ENCODE measurements at regions of chr17 and their contacts with region 1.

Region 1: DNA sequence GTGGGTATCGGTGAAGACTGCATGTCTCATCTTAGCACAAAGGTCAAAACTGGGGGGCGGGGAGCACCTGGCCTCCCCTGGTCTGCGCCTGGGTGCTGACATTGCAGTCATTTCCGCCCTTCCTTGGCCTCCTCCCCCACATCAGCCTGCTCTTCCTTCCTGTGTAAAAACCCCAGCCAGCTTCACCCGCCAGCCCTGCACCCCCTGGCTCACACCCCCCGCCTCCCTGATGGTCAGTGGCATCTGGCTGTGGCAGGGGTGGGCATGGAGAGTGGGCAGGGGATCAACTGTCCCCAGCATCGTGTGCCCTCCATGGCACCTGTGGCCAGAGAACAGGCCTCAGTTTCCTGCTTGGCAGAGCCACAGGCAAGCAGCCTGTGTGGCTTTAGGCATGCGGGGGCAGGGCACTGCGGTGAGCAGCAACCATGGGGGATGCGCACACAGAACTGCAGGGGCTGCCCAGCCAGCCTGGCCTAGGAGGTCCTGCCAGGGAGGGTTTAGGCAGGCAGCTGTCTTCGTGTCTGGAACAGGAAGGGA is 26.5 kb upstream of the LASP1NB start:
- DNase-seq: peak; percentile 68
- ATAC-seq: peak; percentile 93
- H3K4me3 Mint-ChIP-seq: peak overlapping the region; percentile 55
- H3K27ac Mint-ChIP-seq: peak overlapping the region; percentile 93
- H3K4me1 Mint-ChIP-seq: peaks cover 42% of the 10 kb centered on the region
- H3K27me3 Mint-ChIP-seq: no peaks in the 10 kb centered on the region
- CTCF ChIP-seq: no peak

Region 2: GRCh38 chr17:38777641-38778250 is 121.1 kb before region 1 on chr17:
- CTCF ChIA-PET with region 1: no interaction called
- POLR2A ChIA-PET with region 1: no interaction called
- intact Hi-C with region 1: no loop called
- DNase-seq: no peak
- ATAC-seq: no peak
- H3K4me3 Mint-ChIP-seq: no peak overlapping the region
- H3K27ac Mint-ChIP-seq: no peak overlapping the region
- H3K4me1 Mint-ChIP-seq: no peaks in the 10 kb centered on the region
- H3K27me3 Mint-ChIP-seq: no peaks in the 10 kb centered on the region
- CTCF ChIP-seq: no peak

Region 3: DNA sequence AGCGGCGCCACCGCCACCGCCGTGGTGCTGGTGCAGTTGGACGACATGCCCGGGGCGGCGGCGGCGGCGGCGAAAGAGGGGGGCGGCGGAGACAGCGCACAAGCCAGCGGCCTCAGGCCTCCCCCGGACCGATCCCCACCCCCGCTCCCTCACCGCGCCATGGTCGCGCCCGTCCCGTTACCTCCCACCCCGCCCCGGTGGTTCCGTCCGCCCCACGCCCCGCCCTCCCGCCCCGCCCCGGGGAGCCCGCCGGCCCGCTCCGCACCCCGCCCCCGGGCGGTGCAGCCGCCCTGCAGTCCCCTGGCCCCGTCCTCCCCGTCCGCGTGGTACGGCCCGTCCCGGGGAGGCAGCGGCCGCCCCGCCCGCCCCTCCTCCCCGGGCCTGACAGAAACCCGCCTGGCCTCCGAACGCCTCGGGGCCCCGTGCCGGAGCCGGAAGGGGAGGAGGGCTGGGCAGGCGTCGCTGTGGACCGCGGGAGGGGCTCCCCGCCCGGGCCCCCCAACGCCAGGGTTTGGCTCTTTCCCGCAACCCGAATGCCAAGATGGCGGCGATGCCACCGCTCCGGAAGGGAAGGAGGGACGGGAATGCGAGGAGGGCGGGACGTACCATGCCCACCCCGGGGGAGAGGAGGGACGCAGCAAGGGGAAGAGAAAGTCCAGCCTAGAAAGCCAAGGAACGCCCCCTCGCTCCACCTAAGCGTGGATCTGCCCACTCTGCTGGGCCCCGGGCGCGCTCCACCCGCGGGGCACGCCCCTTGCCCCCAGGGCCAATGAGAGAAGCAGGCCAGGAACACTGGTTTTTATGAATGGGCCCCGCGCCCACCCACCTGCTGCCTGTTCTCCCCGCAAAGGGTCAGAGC is 99.3 kb before region 1 on chr17 and contains the start of gene PIP4K2B:
- CTCF ChIA-PET with region 1: no interaction called
- POLR2A ChIA-PET with region 1: no interaction called
- intact Hi-C with region 1: loop called (anchors 1 kb)
- DNase-seq: peak; percentile 86
- ATAC-seq: peak; percentile 85
- H3K4me3 Mint-ChIP-seq: peak within 1 kb of the TSS; percentile 88
- H3K27ac Mint-ChIP-seq: peak within 1 kb of the TSS; percentile 87
- H3K4me1 Mint-ChIP-seq: peaks cover 32% of the 10 kb centered on the region
- H3K27me3 Mint-ChIP-seq: no peaks in the 10 kb centered on the region
- CTCF ChIP-seq: no peak
- total RNA-seq, gene PIP4K2B: 32.1 and 33.0 TPM in 2 replicates

Region 4: GRCh38 chr17:38844261-38844757 is 54.6 kb before region 1 on chr17:
- CTCF ChIA-PET with region 1: no interaction called
- POLR2A ChIA-PET with region 1: interaction called, 13 read pairs
- intact Hi-C with region 1: no loop called
- DNase-seq: no peak
- ATAC-seq: no peak
- H3K4me3 Mint-ChIP-seq: no peak overlapping the region
- H3K27ac Mint-ChIP-seq: no peak overlapping the region
- H3K4me1 Mint-ChIP-seq: no peaks in the 10 kb centered on the region
- H3K27me3 Mint-ChIP-seq: no peaks in the 10 kb centered on the region
- CTCF ChIP-seq: no peak

Region 5: GRCh38 chr17:38879878-38880682 is 18.8 kb before region 1 on chr17:
- CTCF ChIA-PET with region 1: interaction called, 3 read pairs
- POLR2A ChIA-PET with region 1: interaction called, 256 read pairs
- intact Hi-C with region 1: loop called (anchors 1 kb)
- DNase-seq: no peak
- ATAC-seq: no peak
- H3K4me3 Mint-ChIP-seq: no peak overlapping the region
- H3K27ac Mint-ChIP-seq: peak overlapping the region; percentile 30
- H3K4me1 Mint-ChIP-seq: peaks cover 86% of the 10 kb centered on the region
- H3K27me3 Mint-ChIP-seq: no peaks in the 10 kb centered on the region
- CTCF ChIP-seq: no peak

Region 6: GRCh38 chr17:38922538-38923297 is 23.8 kb after region 1 on chr17:
- CTCF ChIA-PET with region 1: interaction called, 3 read pairs
- POLR2A ChIA-PET with region 1: interaction called, 31 read pairs
- intact Hi-C with region 1: no loop called
- DNase-seq: no peak
- ATAC-seq: no peak
- H3K4me3 Mint-ChIP-seq: no peak overlapping the region
- H3K27ac Mint-ChIP-seq: peak overlapping the region; percentile 55
- H3K4me1 Mint-ChIP-seq: peaks cover 21% of the 10 kb centered on the region
- H3K27me3 Mint-ChIP-seq: no peaks in the 10 kb centered on the region
- CTCF ChIP-seq: no peak

Measured in activated B cell treated with CpG ODN at 0.5 μM for 24 hours (primary cell).